GM10248 (cell line): ENCODE measurements at regions of chr15 and their contacts with region 1.

Region 1: GRCh38 chr15:68183616-68184315 is 21.4 kb downstream of the CALML4 start:
- DNase-seq: no peak
- CTCF ChIP-seq: no peak

Region 2: GRCh38 chr15:68195336-68196112 is 11.8 kb after region 1 on chr15:
- CTCF ChIA-PET with region 1: interaction called, 10 read pairs
- POLR2A ChIA-PET with region 1: no interaction called
- DNase-seq: no peak
- CTCF ChIP-seq: no peak

Region 3: GRCh38 chr15:68205558-68205944 is 21.8 kb after region 1 on chr15:
- CTCF ChIA-PET with region 1: no interaction called
- POLR2A ChIA-PET with region 1: no interaction called
- DNase-seq: no peak
- CTCF ChIP-seq: no peak

Region 4: DNA sequence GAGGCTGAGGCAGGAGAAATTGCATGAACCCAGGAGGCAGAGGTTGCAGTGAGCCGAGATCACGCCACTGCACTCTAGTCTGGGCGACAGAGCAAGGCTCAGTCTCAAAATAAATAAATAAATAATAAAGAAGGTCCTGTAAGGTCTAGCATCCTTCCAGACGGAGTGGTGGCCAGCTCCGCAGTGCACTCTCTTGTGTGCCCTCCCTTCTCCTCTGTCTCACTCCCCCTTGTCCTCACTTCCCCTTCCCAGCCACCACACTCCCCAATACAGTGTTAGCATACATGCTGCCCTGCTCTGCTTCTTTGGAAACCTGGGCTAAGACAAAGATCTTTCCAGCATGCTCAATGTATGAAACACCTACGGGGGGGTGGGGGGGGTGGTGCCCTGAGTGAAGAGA is 49.2 kb after region 1 on chr15:
- CTCF ChIA-PET with region 1: no interaction called
- POLR2A ChIA-PET with region 1: no interaction called
- DNase-seq: no peak
- CTCF ChIP-seq: no peak